AG04449 (cell line): ENCODE measurements at regions of chr4 and their contacts with region 1.

Region 1: GRCh38 chr4:24488399-24489164 is 95.8 kb downstream of the DHX15 start:
- DNase-seq: no peak
- H3K4me3 ChIP-seq: no peak overlapping the region
- CTCF ChIP-seq: peak; percentile 86

Region 2: GRCh38 chr4:23945451-23946017 is 543.0 kb before region 1 on chr4:
- CTCF ChIA-PET with region 1: no interaction called
- POLR2A ChIA-PET with region 1: no interaction called
- DNase-seq: no peak
- H3K4me3 ChIP-seq: no peak overlapping the region
- CTCF ChIP-seq: no peak

Region 3: DNA sequence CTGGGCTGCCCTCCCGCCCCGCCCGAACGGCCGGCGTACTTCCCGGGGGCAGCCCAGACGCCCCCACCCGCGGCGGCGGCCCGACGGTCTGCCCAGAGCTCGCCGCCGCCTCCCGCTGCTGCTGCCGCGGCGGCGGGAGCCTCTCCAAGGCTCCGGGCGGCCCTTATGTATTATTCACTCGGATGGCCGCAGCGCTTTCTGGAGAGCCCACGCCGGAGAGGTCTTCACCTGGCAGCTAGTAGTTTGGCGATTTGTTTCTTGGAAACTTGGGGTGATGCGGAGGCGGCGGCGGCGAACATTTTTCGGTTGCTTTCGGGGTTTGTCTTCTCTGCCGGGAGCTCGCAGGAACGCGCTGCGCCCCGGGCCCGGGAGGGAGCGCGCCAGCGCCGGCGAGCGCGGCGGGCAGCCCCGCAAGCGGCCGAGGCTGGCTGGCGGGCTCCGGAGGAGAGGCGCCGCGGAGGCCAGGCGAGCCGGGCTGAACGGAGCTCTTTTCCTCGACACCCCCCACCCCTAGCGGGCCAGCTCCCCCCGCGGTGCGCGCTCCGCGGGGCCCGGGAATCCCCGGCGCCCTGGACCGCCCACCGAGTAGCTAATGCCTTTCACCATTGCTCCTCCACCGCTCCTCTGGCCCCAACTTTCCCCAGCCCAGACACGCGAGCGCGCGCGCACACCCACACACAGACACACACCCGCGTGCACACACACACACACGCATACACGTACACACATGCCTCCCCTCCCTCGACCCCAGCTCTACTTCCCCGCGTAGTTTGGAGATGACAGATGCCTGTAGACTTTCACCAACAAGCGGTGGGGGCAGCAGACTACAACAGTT is 17.7 kb before region 1 on chr4:
- CTCF ChIA-PET with region 1: interaction called, 63 read pairs
- POLR2A ChIA-PET with region 1: no interaction called
- DNase-seq: no peak
- H3K4me3 ChIP-seq: peak overlapping the region; percentile 66
- CTCF ChIP-seq: no peak

Region 4: DNA sequence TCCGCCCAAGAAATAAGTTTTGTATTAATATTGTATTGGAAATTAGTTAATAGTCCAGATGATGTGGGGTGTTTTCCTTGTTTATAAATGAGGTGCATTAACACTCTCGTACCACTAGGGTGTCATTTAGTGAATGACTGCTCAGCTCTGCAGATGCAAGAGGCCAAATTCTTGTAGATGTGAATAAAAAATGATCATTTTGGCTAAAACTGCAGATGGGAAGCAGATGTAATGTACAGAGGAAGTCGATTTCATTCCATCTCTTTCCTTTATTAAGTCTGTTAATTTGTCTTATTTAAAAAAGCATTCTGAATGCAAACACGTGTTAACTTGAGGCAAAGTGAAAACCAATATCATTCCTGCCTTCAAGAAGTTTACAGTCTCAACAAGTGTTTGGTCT is 12.3 kb before region 1 on chr4:
- CTCF ChIA-PET with region 1: interaction called, 63 read pairs
- POLR2A ChIA-PET with region 1: no interaction called
- DNase-seq: no peak
- H3K4me3 ChIP-seq: no peak overlapping the region
- CTCF ChIP-seq: peak; percentile 41

Region 5: GRCh38 chr4:24988776-24989175 is 500.2 kb after region 1 on chr4:
- CTCF ChIA-PET with region 1: interaction called, 10 read pairs
- POLR2A ChIA-PET with region 1: no interaction called
- DNase-seq: no peak
- H3K4me3 ChIP-seq: no peak overlapping the region
- CTCF ChIP-seq: peak; percentile 47